IMR-90 (cell line): ENCODE measurements at regions of chr2 and their contacts with region 1.

Region 1: DNA sequence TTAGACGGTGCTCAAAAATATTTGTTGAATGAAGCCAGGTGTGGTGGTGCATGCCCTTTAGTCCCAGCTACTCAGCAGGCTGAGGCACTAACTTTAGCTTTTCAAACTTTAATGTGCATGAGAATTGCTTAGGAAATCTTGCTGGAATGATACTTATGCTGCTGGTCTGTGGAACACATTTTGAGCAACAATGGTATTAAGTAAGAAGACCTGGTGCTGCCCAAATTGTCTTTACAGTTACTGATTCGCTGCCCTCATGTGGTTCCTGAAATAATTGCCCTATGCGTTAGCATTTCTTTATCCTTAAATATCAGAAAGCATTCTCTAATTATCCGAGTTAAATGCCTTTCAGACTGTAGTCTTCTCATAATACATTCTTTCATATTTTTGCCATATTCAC is 76.0 kb upstream of the SESTD1 start:
- DNase-seq: peak; percentile 28
- ATAC-seq: no peak
- H3K4me3 ChIP-seq: no peak overlapping the region
- H3K27ac ChIP-seq: no peak overlapping the region
- H3K4me1 ChIP-seq: peaks cover 4% of the 10 kb centered on the region
- H3K27me3 ChIP-seq: no peaks in the 10 kb centered on the region; the same call in 1 of the 2 replicates
- CTCF ChIP-seq: peak; percentile 41
- POLR2A ChIP-seq: no peak
- RAD21 ChIP-seq: peak; percentile 28

Region 2: DNA sequence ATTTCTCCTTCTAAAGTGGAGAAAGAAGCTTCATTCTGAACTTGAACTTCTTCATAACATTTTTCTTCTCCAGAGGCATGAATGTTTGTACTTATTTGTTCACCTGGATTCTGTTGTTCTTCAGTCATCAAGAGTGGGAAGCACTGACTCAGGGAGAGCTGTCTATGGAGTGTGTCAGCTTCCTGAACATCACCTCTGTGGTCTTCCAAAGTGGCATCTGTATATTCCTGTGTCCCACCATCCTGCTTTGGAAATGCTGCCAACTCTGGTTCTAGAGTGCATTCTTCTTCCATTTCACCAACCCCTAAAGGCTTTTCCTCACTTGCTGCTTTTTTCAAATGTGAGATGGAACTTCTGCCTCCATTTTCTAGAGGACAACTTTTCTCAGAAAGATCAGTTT is 592.9 kb before region 1 on chr2:
- CTCF ChIA-PET with region 1: no interaction called
- POLR2A ChIA-PET with region 1: no interaction called
- dilution Hi-C with region 1: no loop called
- in situ Hi-C with region 1: no loop called
- intact Hi-C with region 1: no loop called
- DNase-seq: peak; percentile 7
- ATAC-seq: no peak
- H3K4me3 ChIP-seq: no peak overlapping the region
- H3K27ac ChIP-seq: no peak overlapping the region
- H3K4me1 ChIP-seq: no peaks in the 10 kb centered on the region
- H3K27me3 ChIP-seq: no peaks in the 10 kb centered on the region; the same call in 1 of the 2 replicates
- CTCF ChIP-seq: no peak
- POLR2A ChIP-seq: no peak
- RAD21 ChIP-seq: no peak

Region 3: DNA sequence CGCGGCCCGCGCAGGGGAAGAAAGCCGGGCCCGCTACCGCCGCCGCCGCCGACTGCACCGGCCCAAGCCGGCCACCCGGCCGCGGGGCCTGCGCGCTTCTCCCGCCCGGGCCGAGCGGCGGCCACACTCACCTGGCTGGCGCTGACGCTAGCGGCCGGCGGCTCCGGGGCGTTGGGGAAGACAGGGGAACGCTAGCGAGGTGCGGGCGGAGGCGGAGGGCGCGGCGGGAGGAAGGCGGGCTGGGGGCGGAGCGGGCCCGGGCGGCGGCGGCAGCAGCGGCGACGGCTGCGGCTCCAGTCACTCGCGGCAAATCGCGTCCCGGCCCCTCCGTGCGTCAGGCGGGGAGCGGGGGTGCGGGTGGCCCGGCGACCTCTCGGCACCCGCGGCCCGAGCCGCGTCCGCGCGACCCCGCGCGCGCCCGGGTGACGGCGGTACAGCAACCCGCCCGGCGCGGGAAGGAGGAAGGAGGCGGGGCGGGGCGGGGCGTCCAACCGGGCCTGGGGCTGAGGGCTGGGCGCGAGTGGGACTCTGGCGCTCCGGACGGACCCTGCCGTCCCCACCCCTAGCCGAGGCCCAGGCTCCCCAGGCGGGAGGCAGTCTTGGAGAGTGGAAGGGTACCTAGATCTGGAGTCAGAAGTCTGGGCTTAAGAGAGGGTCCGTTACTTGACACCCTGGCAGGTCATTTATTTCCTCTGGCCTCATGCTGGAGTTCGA is 76.1 kb before region 1 on chr2 and contains the start of gene SESTD1:
- CTCF ChIA-PET with region 1: no interaction called
- POLR2A ChIA-PET with region 1: no interaction called
- dilution Hi-C with region 1: no loop called
- in situ Hi-C with region 1: no loop called
- intact Hi-C with region 1: loop called (anchors 5 kb)
- DNase-seq: peak; percentile 7
- ATAC-seq: peak; percentile 82
- H3K4me3 ChIP-seq: peak within 1 kb of the TSS; percentile 95
- H3K27ac ChIP-seq: peak within 1 kb of the TSS; percentile 50
- H3K4me1 ChIP-seq: peaks cover 2% of the 10 kb centered on the region
- H3K27me3 ChIP-seq: no peaks in the 10 kb centered on the region
- CTCF ChIP-seq: no peak
- POLR2A ChIP-seq: no peak
- RAD21 ChIP-seq: no peak
- total RNA-seq, gene SESTD1: 11.1 and 12.7 TPM in 2 replicates

Region 4: GRCh38 chr2:179428649-179429048 is 88.0 kb after region 1 on chr2:
- CTCF ChIA-PET with region 1: no interaction called
- POLR2A ChIA-PET with region 1: no interaction called
- dilution Hi-C with region 1: no loop called
- in situ Hi-C with region 1: no loop called
- intact Hi-C with region 1: no loop called
- DNase-seq: no peak
- ATAC-seq: no peak
- H3K4me3 ChIP-seq: no peak overlapping the region
- H3K27ac ChIP-seq: no peak overlapping the region
- H3K4me1 ChIP-seq: no peaks in the 10 kb centered on the region
- H3K27me3 ChIP-seq: no peaks in the 10 kb centered on the region
- CTCF ChIP-seq: no peak
- POLR2A ChIP-seq: no peak
- RAD21 ChIP-seq: no peak

Region 5: GRCh38 chr2:179460181-179460929 is 119.7 kb after region 1 on chr2:
- CTCF ChIA-PET with region 1: no interaction called
- POLR2A ChIA-PET with region 1: no interaction called
- dilution Hi-C with region 1: no loop called
- in situ Hi-C with region 1: no loop called
- intact Hi-C with region 1: no loop called
- DNase-seq: peak; percentile 96
- ATAC-seq: peak; percentile 74
- H3K4me3 ChIP-seq: no peak overlapping the region
- H3K27ac ChIP-seq: peak overlapping the region; percentile 79
- H3K4me1 ChIP-seq: peaks cover 2% of the 10 kb centered on the region
- H3K27me3 ChIP-seq: no peaks in the 10 kb centered on the region
- CTCF ChIP-seq: no peak
- POLR2A ChIP-seq: no peak
- RAD21 ChIP-seq: no peak